Adrenal gland (tissue), 19 donors: ENCODE measurements at regions of chr7 and their contacts with region 1.

Region 1: DNA sequence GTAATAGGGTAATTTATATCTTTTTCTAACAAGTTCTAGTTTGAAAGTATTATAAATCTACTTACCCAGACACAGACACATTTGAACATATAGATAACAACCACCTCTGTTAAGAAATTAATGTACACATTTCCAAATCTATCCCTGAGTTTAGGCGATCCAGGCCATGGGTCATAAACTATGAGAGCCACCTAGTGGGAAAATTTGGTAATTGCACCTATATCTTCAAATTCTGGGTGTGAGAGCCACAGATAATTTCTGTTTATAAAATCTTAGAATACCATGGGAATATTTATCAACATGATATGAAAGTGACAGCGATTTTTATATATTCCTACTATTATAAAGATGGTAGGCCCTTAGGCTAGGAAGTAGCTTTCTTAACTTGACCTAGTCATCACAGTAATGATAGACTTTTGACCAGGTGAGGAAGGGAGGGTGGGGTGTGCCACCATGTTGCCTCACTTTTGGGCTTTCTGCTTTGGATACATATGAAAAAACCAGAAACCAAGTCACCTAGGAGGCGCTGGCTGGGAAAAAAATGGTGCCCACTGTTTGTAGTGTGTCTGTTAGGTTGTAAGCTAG is 8.0 kb upstream of the EPHA1 start:
- DNase-seq: no peak
- H3K4me3 ChIP-seq: no peak overlapping the region
- H3K27ac ChIP-seq: no peak overlapping the region
- H3K4me1 ChIP-seq: no peaks in the 10 kb centered on the region
- H3K27me3 ChIP-seq: peaks cover 16% of the 10 kb centered on the region
- CTCF ChIP-seq: peak; percentile 52 to 84 (median 68)
- POLR2A ChIP-seq: no peak

Region 2: GRCh38 chr7:143222782-143223181 is 193.9 kb before region 1 on chr7:
- intact Hi-C with region 1: no loop called
- DNase-seq: peak in 5 of 7 donors; percentile 32 to 65 (median 41)
- H3K4me3 ChIP-seq: no peak overlapping the region
- H3K27ac ChIP-seq: peak overlapping the region in 2 of 5 donors; percentile 2 to 36
- H3K4me1 ChIP-seq: peaks cover 0 to 5% of the 10 kb centered on the region in 2 donors
- H3K27me3 ChIP-seq: no peaks in the 10 kb centered on the region
- CTCF ChIP-seq: no peak
- POLR2A ChIP-seq: no peak

Region 3: GRCh38 chr7:143240291-143241168 is 176.1 kb before region 1 on chr7:
- intact Hi-C with region 1: loop called (anchors 2 to 10 kb)
- DNase-seq: peak; percentile 65 to 87 (median 77)
- H3K4me3 ChIP-seq: no peak overlapping the region
- H3K27ac ChIP-seq: peak overlapping the region in 3 of 5 donors; percentile 18 to 65 (median 56)
- H3K4me1 ChIP-seq: peaks cover 0 to 4% of the 10 kb centered on the region in 2 donors
- H3K27me3 ChIP-seq: no peaks in the 10 kb centered on the region
- CTCF ChIP-seq: peak; percentile 82 to 96 (median 88)
- POLR2A ChIP-seq: no peak

Region 4: GRCh38 chr7:143305423-143306070 is 111.1 kb before region 1 on chr7:
- intact Hi-C with region 1: loop called in 1 of 2 experiments (anchors 10 kb)
- DNase-seq: peak; percentile 58 to 86 (median 76)
- H3K4me3 ChIP-seq: no peak overlapping the region
- H3K27ac ChIP-seq: no peak overlapping the region
- H3K4me1 ChIP-seq: no peaks in the 10 kb centered on the region
- H3K27me3 ChIP-seq: no peaks in the 10 kb centered on the region
- CTCF ChIP-seq: peak; percentile 64 to 79 (median 71)
- POLR2A ChIP-seq: no peak

Region 5: DNA sequence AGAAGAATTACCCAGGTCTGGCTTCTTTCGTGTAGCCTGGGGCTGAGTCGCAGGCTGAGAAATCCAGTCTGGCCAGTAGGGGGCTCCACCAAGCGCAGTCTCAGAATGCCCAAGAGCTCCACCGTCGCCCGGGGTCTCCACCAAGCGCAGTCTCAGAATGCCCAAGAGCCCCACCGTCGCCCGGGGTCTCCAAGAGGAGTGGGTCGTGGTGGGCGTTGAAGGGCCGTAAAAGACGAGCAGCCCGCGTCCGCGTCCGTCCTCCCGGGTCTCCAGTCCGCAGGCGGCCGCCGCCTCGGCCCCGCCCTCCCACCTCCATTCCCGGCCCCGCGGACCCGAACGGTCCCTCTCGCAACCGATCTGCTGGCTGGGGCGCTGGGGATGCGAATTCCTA is 36.4 kb before region 1 on chr7:
- intact Hi-C with region 1: loop called in 1 of 2 experiments (anchors 5 kb)
- DNase-seq: peak; percentile 84 to 96 (median 89)
- H3K4me3 ChIP-seq: peak overlapping the region; percentile 48 to 99 (median 92)
- H3K27ac ChIP-seq: peak overlapping the region; percentile 15 to 99 (median 88)
- H3K4me1 ChIP-seq: peaks cover 7 to 39% of the 10 kb centered on the region in 2 donors
- H3K27me3 ChIP-seq: no peaks in the 10 kb centered on the region
- CTCF ChIP-seq: peak; percentile 83 to 94 (median 88)
- POLR2A ChIP-seq: no peak